ENCODE measurements at regions of chr3 and their contacts with region 1.

Region 1: DNA sequence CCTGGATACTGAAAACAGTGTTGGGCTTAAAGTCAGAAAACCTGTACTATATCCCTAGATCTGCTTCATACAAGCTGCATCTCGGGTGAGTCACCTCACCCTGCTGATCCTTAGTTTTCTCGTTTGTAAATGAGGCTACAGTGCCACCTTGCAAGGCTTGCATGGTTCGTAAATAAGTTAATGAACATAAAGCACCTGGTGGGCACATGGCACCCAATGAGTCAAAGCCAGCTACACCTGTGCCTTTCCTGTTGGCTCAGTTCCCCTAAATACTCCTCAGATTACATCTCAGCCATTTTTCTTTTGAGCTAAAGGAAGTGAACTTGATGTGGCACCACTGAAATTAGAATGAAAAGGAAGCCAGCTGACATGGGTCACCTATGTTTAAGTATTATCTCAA is 26.5 kb downstream of the RTP1 start:
- DNase-seq: no peak
- ATAC-seq: no peak
- H3K4me3 ChIP-seq: no peak overlapping the region
- H3K27ac ChIP-seq: no peak overlapping the region
- H3K4me1 ChIP-seq: peaks cover 0 to 2% of the 10 kb centered on the region in 2 donors
- H3K27me3 ChIP-seq: no peaks in the 10 kb centered on the region

Region 2: GRCh38 chr3:187181454-187182170 is 42.2 kb before region 1 on chr3:
- intact Hi-C with region 1: no loop called
- DNase-seq: no peak
- ATAC-seq: no peak
- H3K4me3 ChIP-seq: no peak overlapping the region
- H3K27ac ChIP-seq: no peak overlapping the region
- H3K4me1 ChIP-seq: peaks cover 2 to 3% of the 10 kb centered on the region in 2 donors
- H3K27me3 ChIP-seq: no peaks in the 10 kb centered on the region

Region 3: DNA sequence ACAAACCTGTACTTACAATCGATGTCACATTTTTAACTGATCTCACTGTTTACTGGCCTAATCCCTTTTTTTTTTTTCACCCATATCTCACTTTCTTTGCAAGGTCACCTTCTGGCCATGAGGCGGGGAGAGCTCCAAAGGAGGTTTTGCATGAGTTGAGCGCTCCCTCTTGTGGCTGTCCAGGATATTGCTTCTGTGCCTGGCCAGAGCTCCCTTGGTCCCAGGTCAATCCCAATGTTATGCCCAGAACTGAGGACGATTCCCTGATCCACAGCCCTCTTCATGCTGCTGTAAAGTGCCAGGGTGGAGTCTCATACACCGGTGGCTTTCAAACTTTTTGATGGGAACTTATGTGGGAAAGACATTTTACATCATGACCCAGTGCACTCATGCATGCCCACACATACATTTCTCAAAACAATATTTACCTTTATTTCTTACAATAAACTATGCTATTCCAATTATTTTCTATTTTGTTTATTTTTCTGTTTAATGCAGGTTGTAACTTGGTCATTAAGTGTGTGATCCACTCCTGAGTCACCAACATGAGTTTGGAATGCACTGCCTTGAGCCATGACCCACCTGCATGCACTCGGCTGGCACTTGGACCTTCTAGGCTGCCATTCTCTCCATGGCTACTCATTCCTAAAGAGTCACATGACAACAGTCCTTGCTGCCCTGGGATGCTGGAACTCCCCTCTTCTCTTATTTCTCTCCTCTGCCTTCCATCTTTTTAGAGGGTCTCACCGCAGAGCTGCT is 456.0 kb after region 1 on chr3:
- intact Hi-C with region 1: loop called (anchors 2 kb)
- DNase-seq: peak; percentile 79 to 90
- ATAC-seq: peak; percentile 91
- H3K4me3 ChIP-seq: no peak overlapping the region
- H3K27ac ChIP-seq: no peak overlapping the region
- H3K4me1 ChIP-seq: no peaks in the 10 kb centered on the region
- H3K27me3 ChIP-seq: no peaks in the 10 kb centered on the region

Measured in aorta (tissue), 5 donors.